GM12878 (cell line): ENCODE measurements at regions of chr5 and their contacts with region 1.

Region 1: GRCh38 chr5:132526290-132526973 is 16.9 kb downstream of the IL5 start:
- DNase-seq: peak; percentile 53
- ATAC-seq: peak; percentile 73
- H3K4me3 ChIP-seq: no peak overlapping the region
- H3K27ac ChIP-seq: peak overlapping the region; percentile 84; the same call in 1 of the 2 replicates
- H3K4me1 ChIP-seq: peaks cover 32% of the 10 kb centered on the region
- H3K27me3 ChIP-seq: no peaks in the 10 kb centered on the region
- CTCF ChIP-seq: peak; percentile 57 to 87 (median 76); a peak in 5 of 6 replicates
- EP300 ChIP-seq: no peak
- POLR2A ChIP-seq: no peak
- RAD21 ChIP-seq: peak; percentile 80

Region 2: DNA sequence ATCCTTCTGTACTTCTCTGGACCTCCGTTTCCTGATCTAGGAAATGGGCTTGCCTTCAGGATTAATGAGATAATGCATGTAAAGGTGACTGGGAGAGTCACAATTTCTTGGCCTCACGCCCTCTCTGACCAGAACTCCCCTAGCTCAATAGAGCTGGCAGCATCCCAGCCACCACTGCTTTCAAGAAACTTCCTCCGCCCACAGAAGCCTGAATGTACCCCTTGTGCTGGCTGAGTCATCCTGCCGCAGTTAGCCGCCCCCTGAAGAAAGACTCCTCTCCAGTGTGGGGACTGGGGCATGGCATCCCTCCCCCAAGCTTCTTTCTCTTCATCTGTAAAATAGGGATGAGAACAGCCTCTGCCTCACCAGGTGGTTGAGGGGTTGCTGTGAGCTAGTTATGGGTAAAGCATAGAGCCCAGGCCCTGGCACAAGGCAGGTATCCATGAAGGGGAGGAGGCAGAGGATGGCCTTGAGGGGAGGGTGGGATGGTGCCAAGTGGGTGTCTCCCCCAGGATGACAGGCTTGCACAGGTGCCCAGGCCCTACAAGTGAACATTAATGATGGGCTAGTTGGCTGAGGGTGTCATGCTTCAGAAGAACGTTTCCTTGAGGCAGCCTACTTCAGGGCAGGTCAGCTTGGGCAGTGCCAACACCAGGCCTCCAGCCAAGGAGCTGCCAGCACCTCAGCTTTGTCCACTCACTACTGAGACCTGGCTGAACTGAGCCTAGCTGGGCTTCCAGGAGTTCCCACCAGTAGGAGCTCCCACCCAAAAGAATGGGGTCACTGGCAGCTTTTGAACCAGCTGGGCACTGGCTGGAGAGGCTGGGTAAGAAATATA is 265.5 kb before region 1 on chr5:
- CTCF ChIA-PET with region 1: no interaction called
- POLR2A ChIA-PET with region 1: no interaction called
- RAD21 ChIA-PET with region 1: no interaction called
- SMC1A ChIA-PET with region 1: no interaction called
- in situ Hi-C with region 1: no loop called
- intact Hi-C with region 1: no loop called
- DNase-seq: peak; percentile 61
- ATAC-seq: peak; percentile 73
- H3K4me3 ChIP-seq: no peak overlapping the region
- H3K27ac ChIP-seq: no peak overlapping the region
- H3K4me1 ChIP-seq: peaks cover 6% of the 10 kb centered on the region; the same call in 1 of the 2 replicates
- H3K27me3 ChIP-seq: peaks cover 2 to 7% of the 10 kb centered on the region in 2 experiments
- CTCF ChIP-seq: no peak
- EP300 ChIP-seq: no peak
- POLR2A ChIP-seq: no peak
- RAD21 ChIP-seq: no peak

Region 3: DNA sequence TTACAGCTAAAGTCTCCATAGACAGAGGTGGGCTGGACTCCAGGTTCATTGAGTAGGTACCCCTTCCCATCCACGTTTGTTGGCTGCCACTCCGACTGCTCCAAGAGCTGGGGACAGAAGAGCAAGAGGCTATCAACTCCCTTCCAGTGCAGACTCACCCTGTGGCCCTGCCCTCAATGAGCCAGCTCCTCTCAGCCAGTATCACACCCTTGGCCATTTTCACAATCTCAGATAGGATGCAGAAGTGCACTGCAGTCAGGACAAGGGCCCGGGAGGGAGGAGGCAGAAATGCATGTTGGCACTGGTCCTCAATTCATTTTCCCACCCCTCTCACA is 42.1 kb before region 1 on chr5:
- CTCF ChIA-PET with region 1: no interaction called
- POLR2A ChIA-PET with region 1: no interaction called
- RAD21 ChIA-PET with region 1: no interaction called
- SMC1A ChIA-PET with region 1: no interaction called
- in situ Hi-C with region 1: no loop called
- intact Hi-C with region 1: no loop called
- DNase-seq: no peak
- ATAC-seq: no peak
- H3K4me3 ChIP-seq: no peak overlapping the region
- H3K27ac ChIP-seq: no peak overlapping the region
- H3K4me1 ChIP-seq: peaks cover 44% of the 10 kb centered on the region
- H3K27me3 ChIP-seq: no peaks in the 10 kb centered on the region
- CTCF ChIP-seq: no peak
- EP300 ChIP-seq: no peak
- POLR2A ChIP-seq: peak; percentile 49
- RAD21 ChIP-seq: no peak

Region 4: GRCh38 chr5:132506094-132506692 is 20.2 kb before region 1 on chr5:
- CTCF ChIA-PET with region 1: interaction called, 29 read pairs
- POLR2A ChIA-PET with region 1: interaction called, 11 read pairs
- RAD21 ChIA-PET with region 1: interaction called, 29 read pairs
- SMC1A ChIA-PET with region 1: interaction called, 32 read pairs
- in situ Hi-C with region 1: no loop called
- intact Hi-C with region 1: loop called (anchors 1 kb)
- DNase-seq: no peak
- ATAC-seq: peak; percentile 89
- H3K4me3 ChIP-seq: no peak overlapping the region
- H3K27ac ChIP-seq: no peak overlapping the region
- H3K4me1 ChIP-seq: peaks cover 14% of the 10 kb centered on the region
- H3K27me3 ChIP-seq: no peaks in the 10 kb centered on the region
- CTCF ChIP-seq: peak; percentile 69 to 77 (median 74)
- EP300 ChIP-seq: no peak
- POLR2A ChIP-seq: no peak
- RAD21 ChIP-seq: peak; percentile 81

Region 5: GRCh38 chr5:132591145-132591544 is 64.7 kb after region 1 on chr5:
- CTCF ChIA-PET with region 1: interaction called, 10 read pairs
- POLR2A ChIA-PET with region 1: interaction called, 3 read pairs
- RAD21 ChIA-PET with region 1: interaction called, 5 read pairs
- SMC1A ChIA-PET with region 1: interaction called, 3 read pairs
- in situ Hi-C with region 1: no loop called
- intact Hi-C with region 1: loop called (anchors 5 kb)
- DNase-seq: no peak
- ATAC-seq: peak; percentile 54; the same call in 2 of the 3 replicates
- H3K4me3 ChIP-seq: no peak overlapping the region
- H3K27ac ChIP-seq: no peak overlapping the region
- H3K4me1 ChIP-seq: no peaks in the 10 kb centered on the region
- H3K27me3 ChIP-seq: no peaks in the 10 kb centered on the region
- CTCF ChIP-seq: peak in 2 of 3 experiments; percentile 31 to 59; a peak in 3 of 6 replicates
- EP300 ChIP-seq: no peak
- POLR2A ChIP-seq: no peak
- RAD21 ChIP-seq: peak; percentile 69

Region 6: GRCh38 chr5:132647473-132647872 is 121.0 kb after region 1 on chr5:
- CTCF ChIA-PET with region 1: no interaction called
- POLR2A ChIA-PET with region 1: no interaction called
- RAD21 ChIA-PET with region 1: no interaction called
- SMC1A ChIA-PET with region 1: no interaction called
- in situ Hi-C with region 1: no loop called
- intact Hi-C with region 1: no loop called
- DNase-seq: no peak
- ATAC-seq: no peak
- H3K4me3 ChIP-seq: no peak overlapping the region
- H3K27ac ChIP-seq: no peak overlapping the region
- H3K4me1 ChIP-seq: no peaks in the 10 kb centered on the region
- H3K27me3 ChIP-seq: no peaks in the 10 kb centered on the region
- CTCF ChIP-seq: no peak
- EP300 ChIP-seq: no peak
- POLR2A ChIP-seq: no peak
- RAD21 ChIP-seq: no peak

Region 7: DNA sequence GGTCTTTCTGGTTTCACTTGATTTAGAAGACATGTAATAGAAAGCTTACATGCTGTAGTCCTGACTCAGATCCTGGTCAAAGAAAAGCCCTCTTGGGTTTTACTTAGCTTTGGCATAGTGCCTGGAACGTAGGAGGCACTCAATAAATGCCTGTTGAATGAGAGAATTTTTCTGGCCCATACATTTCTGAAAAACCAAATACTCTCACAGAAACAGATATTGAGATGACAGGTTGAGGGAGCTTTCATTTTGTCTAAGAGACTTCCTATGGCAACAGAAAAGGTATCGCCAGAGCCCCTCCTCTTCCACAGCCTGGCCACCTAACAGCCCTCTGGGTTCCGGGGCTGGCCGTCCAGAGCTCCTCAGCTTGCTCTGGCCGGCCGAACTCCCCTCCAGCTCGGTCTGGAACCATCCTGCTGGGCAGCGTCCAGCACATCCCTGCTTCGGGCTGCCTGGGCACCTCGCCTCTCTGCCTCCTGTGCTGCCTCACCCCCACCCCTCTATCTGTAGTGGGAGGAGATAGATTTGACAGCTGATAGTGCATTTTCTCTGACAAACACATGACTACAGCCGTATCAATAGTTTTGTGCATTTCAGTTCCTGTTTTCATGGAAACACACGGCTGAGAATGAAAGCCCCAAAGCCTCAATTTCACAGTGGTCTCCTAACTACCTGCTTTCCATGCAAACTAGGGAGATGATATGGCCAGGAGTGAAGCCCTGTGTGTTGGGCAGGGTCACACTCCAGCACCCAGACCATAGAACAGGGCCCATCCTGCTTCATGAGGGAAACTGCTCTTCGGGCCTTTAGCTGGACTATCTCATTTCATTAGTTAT is 148.5 kb after region 1 on chr5:
- CTCF ChIA-PET with region 1: interaction called, 12 read pairs
- POLR2A ChIA-PET with region 1: no interaction called
- RAD21 ChIA-PET with region 1: interaction called, 4 read pairs
- SMC1A ChIA-PET with region 1: interaction called, 4 read pairs
- in situ Hi-C with region 1: no loop called
- intact Hi-C with region 1: no loop called
- DNase-seq: peak; percentile 93
- ATAC-seq: peak; percentile 88
- H3K4me3 ChIP-seq: peak overlapping the region; percentile 29; the same call in 1 of the 2 replicates
- H3K27ac ChIP-seq: peak overlapping the region; percentile 75
- H3K4me1 ChIP-seq: peaks cover 33% of the 10 kb centered on the region
- H3K27me3 ChIP-seq: no peaks in the 10 kb centered on the region
- CTCF ChIP-seq: no peak
- EP300 ChIP-seq: peak; percentile 92 to 96
- POLR2A ChIP-seq: peak; percentile 33; the same call in 1 of the 2 replicates
- RAD21 ChIP-seq: no peak

Region 8: GRCh38 chr5:132797651-132798050 is 271.2 kb after region 1 on chr5:
- CTCF ChIA-PET with region 1: interaction called, 10 read pairs
- POLR2A ChIA-PET with region 1: no interaction called
- RAD21 ChIA-PET with region 1: interaction called, 10 read pairs
- SMC1A ChIA-PET with region 1: interaction called, 8 read pairs
- in situ Hi-C with region 1: no loop called
- intact Hi-C with region 1: no loop called
- DNase-seq: no peak
- ATAC-seq: no peak
- H3K4me3 ChIP-seq: no peak overlapping the region
- H3K27ac ChIP-seq: no peak overlapping the region
- H3K4me1 ChIP-seq: no peaks in the 10 kb centered on the region
- H3K27me3 ChIP-seq: no peaks in the 10 kb centered on the region
- CTCF ChIP-seq: no peak
- EP300 ChIP-seq: no peak
- POLR2A ChIP-seq: no peak
- RAD21 ChIP-seq: no peak

Region 9: GRCh38 chr5:132866342-132867045 is 340.1 kb after region 1 on chr5 and contains the starts of genes GDF9 and UQCRQ:
- CTCF ChIA-PET with region 1: interaction called, 10 read pairs
- POLR2A ChIA-PET with region 1: no interaction called
- RAD21 ChIA-PET with region 1: no interaction called
- SMC1A ChIA-PET with region 1: interaction called, 4 read pairs
- in situ Hi-C with region 1: no loop called
- intact Hi-C with region 1: no loop called
- DNase-seq: peak; percentile 98
- ATAC-seq: peak; percentile 99
- H3K4me3 ChIP-seq: peak within 1 kb of the TSS; percentile 85
- H3K27ac ChIP-seq: peak within 1 kb of the TSS; percentile 78
- H3K4me1 ChIP-seq: peaks cover 3% of the 10 kb centered on the region
- H3K27me3 ChIP-seq: no peaks in the 10 kb centered on the region
- CTCF ChIP-seq: peak; percentile 10 to 48 (median 18); a peak in 3 of 6 replicates
- EP300 ChIP-seq: no peak
- POLR2A ChIP-seq: peak; percentile 99
- RAD21 ChIP-seq: no peak
- polyA plus RNA-seq, gene GDF9: 0.11 to 0.24 TPM
- polyA plus RNA-seq, gene UQCRQ: 1,403 to 1,579 TPM